Cardiac septum (tissue), 1 donor: ENCODE measurements at regions of chr16 and their contacts with region 1.

Region 1: DNA sequence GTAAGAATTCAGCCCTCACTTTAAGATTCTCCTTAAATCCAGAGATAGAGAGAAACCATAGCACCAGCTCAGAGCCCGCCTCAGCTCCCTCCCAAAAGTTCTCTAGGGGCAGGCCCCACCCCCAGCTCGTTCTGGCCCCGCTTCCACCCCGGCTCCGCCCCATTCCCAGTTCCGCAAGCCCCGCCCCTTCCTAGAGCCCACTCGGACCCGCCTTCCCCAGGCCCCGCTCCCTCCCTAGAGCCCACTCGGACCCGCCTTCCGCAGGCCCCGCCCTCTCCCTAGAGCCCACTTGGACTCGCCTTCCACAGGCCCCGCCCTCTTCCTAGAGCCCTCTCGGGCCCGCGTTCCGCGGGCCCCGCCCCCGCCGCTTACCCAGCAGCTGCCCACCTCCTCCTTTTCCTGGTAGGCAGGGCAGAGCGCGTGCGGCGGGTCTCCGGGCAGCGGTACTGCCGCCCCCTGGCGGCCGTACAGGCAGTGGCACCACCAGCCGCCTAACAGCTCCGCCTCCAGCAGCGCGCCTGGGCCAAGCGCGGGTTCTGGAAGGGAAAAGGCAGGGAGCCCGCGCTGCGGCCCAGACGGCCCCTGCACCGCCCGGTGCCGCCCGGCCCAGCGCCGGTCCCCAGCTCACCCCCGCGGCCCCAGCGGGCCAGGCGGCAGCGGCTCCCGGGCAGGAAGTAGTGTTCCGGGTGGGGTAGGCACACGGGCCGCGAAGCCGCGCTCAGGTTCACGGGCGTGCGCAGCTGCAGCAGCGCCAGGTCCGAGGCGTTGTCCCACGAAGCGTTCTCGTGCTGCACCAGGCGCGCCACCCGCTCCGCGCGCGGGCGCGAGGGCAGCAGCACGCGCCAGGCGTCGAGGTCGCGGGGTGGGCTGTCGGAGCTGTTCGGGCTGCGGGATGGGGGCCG is 6.8 kb upstream of the PRSS8 start:
- DNase-seq: peak; percentile 99

Region 2: DNA sequence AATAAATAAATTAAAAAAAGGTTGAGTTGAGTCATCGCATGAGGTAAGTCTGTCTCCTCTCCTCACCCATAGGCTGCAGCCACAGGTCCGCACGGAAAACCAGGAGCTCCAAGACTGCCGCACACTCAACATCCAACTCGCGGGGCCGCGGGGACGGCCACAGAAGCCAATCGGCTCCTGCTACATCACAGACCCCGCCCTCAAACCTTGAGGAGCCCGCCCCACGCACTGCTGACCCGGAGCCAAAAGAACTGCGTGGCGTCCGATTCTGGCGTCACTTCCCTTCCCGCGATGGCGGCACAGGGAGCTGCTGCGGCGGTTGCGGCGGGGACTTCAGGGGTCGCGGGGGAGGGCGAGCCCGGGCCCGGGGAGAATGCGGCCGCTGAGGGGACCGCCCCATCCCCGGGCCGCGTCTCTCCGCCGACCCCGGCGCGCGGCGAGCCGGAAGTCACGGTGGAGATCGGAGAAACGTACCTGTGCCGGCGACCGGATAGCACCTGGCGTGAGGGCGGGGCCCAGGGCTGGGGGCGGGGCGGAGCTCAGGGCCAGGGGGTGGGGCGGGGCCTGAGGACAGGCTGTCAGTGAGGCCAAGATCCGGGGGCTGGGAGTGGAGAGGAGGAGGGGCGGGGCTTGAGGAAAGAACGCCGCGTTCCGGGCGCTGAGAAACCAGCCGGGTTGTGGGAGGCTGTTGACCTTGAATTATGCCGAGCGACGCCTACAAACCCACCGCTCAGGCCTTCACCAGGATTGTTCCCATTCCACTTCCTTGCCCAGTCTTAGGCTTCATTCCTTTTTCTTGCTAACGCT is 24.8 kb before region 1 on chr16 and contains the start of gene KAT8:
- intact Hi-C with region 1: loop called (anchors 2 kb)
- DNase-seq: peak; percentile 99
- total RNA-seq, gene KAT8: 56.5 TPM